ENCODE measurements at regions of chr5 and their contacts with region 1.

Region 1: DNA sequence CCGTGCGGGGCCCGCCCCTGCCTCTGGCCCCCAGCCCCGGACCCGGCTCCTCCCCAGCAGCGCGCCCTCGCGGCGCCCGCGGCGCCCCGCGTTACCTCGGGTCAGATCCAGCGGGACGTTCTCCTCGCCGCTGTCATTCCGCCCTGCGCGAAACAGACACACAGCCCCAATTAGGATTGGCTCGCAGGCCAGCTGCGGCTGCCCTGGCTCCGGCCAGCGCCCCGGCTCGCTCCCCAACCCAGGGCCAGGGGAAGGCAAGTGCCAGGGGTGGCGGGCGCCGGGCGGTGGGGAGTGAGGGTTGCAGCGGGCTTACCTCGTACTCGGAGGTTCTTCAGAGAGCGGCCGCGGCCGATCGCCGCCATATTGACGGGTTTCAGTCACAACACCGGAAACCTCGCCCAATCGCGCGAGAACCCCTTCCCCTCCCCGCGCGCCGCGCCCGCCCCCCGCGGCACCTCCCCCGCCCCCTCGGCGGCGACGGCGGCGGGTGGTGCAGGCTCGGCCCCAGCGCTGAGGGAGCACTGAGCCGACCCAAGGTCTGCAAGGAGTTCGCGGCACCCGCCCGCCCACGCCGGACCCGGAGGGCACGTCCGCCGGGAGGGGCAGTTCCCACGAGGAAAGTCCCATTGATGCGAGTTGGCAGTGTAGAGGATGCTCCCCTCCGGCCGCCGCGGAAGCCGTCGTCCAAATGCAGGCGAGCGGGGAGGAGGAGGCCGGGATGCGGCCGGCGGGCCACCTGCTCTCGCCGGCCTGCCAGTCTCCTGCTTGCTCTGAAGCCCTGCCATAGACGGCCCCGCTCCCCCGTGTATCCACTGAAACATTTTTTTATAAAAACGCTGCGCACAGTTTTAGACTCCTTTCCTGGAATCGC is at the start of gene RICTOR:
- DNase-seq: peak; percentile 92
- ATAC-seq: peak; percentile 79
- H3K4me3 ChIP-seq: peak within 1 kb of the TSS; percentile 75 to 95 (median 82)
- H3K4me3 Mint-ChIP-seq: peak within 1 kb of the TSS; percentile 99
- H3K27ac ChIP-seq: peak within 1 kb of the TSS; percentile 88 to 96
- H3K27ac Mint-ChIP-seq: peak within 1 kb of the TSS; percentile 99
- H3K4me1 ChIP-seq: peaks cover 22 to 39% of the 10 kb centered on the region in 2 donors
- H3K4me1 Mint-ChIP-seq: peaks cover 53% of the 10 kb centered on the region
- H3K27me3 ChIP-seq: no peaks in the 10 kb centered on the region
- H3K27me3 Mint-ChIP-seq: no peaks in the 10 kb centered on the region
- CTCF ChIP-seq: no peak
- total RNA-seq, gene RICTOR: 82.8 and 84.3 TPM in 2 replicates

Region 2: GRCh38 chr5:39040875-39041274 is 33.4 kb before region 1 on chr5:
- CTCF ChIA-PET with region 1: no interaction called
- POLR2A ChIA-PET with region 1: no interaction called
- intact Hi-C with region 1: loop called (anchors 5 kb)
- DNase-seq: no peak
- ATAC-seq: no peak
- H3K4me3 ChIP-seq: no peak overlapping the region
- H3K4me3 Mint-ChIP-seq: no peak overlapping the region
- H3K27ac ChIP-seq: no peak overlapping the region
- H3K27ac Mint-ChIP-seq: no peak overlapping the region
- H3K4me1 ChIP-seq: no peaks in the 10 kb centered on the region
- H3K4me1 Mint-ChIP-seq: peaks cover 43% of the 10 kb centered on the region
- H3K27me3 ChIP-seq: no peaks in the 10 kb centered on the region
- H3K27me3 Mint-ChIP-seq: no peaks in the 10 kb centered on the region
- CTCF ChIP-seq: no peak

Region 3: DNA sequence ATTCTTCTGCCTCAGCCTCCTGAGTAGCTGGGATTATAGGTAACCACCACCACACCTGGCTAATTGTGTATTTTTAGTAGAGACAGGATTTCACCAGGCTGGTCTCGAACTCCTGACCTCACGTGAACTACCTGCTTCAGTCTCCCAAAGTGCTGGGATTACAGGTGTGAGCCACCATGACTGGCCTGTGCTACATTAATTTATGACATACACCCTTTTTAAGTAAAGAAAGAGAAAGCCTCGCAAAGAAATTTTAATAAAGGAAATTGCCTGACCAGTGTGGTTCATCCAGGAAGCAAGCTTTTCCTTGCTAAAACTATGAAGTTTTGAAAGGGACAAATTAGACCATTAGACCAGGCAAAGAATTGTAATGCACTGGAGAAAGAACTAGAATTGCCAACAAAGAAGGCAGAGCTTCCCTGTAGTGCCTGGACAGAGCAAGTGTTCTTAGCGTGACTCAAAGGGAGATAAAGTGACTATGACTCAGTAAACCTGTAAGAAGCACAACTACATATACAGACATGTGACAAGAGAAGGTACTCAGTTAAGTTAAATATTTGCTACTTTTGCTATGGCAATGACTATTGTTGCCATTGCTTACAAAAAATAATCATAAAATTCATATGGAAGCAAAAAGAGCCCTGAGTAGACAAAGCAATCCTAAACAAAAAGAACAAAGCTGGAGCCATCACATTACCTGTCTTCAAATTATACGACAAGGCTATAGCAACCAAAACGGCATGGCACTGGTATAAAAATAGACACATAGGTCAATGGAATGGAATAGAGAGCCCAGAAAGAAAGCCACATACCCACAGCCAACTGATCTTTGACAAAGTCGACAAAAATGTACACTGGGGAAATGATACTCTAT is 90.5 kb after region 1 on chr5:
- CTCF ChIA-PET with region 1: no interaction called
- POLR2A ChIA-PET with region 1: no interaction called
- intact Hi-C with region 1: no loop called
- DNase-seq: no peak
- ATAC-seq: no peak
- H3K4me3 ChIP-seq: no peak overlapping the region
- H3K4me3 Mint-ChIP-seq: no peak overlapping the region
- H3K27ac ChIP-seq: no peak overlapping the region
- H3K27ac Mint-ChIP-seq: no peak overlapping the region
- H3K4me1 ChIP-seq: peaks cover 7 to 8% of the 10 kb centered on the region in 2 donors
- H3K4me1 Mint-ChIP-seq: peaks cover 9% of the 10 kb centered on the region
- H3K27me3 ChIP-seq: no peaks in the 10 kb centered on the region
- H3K27me3 Mint-ChIP-seq: peaks cover 10% of the 10 kb centered on the region
- CTCF ChIP-seq: no peak

Region 4: GRCh38 chr5:39274398-39275085 is 200.3 kb after region 1 on chr5:
- CTCF ChIA-PET with region 1: no interaction called
- POLR2A ChIA-PET with region 1: no interaction called
- intact Hi-C with region 1: loop called (anchors 2 kb)
- DNase-seq: peak; percentile 64
- ATAC-seq: peak; percentile 78
- H3K4me3 ChIP-seq: peak overlapping the region; percentile 12 to 63 (median 41)
- H3K4me3 Mint-ChIP-seq: peak overlapping the region; percentile 87
- H3K27ac ChIP-seq: peak overlapping the region; percentile 81 to 83
- H3K27ac Mint-ChIP-seq: peak overlapping the region; percentile 93
- H3K4me1 ChIP-seq: peaks cover 29 to 30% of the 10 kb centered on the region in 2 donors
- H3K4me1 Mint-ChIP-seq: peaks cover 32% of the 10 kb centered on the region
- H3K27me3 ChIP-seq: no peaks in the 10 kb centered on the region
- H3K27me3 Mint-ChIP-seq: no peaks in the 10 kb centered on the region
- CTCF ChIP-seq: no peak

Region 5: DNA sequence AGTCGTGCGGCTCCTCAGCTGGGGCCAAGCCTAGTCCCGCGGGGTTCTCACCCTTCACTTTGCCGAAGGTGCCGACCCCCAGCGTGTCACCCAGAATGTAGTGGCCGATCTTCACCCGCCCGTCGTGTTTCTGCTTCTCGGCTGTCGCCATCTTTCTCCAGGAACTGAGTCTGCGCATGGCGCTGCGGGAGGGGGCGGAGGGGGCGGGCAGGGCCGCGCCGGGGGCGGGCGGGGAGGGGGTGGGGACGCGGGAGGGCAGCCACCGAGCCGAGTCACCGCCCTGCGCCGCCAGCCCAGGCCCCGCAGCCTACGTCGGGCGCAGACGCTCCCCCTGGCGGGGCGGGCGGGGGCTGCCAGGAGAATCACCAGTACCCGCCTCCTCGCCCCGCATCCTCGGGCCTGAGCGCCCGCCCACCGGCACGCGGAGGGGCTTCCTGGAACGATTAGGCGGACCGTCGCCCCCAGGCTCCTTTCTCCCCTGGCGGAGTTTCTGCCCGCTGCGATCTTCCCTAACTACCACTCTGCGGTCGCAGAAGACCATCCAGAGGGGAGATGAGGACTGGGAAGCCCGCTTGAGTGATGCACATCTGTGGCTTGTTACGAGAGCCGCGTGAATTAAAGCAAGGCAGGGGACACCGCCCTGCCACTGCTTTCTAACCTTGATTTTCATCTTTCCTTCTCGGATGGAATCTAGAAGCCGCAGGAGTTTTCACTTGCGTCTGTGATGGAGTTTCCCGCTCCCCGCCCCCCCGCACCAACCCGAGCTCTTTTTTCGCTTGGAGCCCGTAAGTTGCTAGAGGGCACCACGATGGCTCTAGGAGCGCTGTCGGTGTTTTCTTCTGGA is 1724.0 kb after region 1 on chr5 and contains the start of gene PRKAA1:
- CTCF ChIA-PET with region 1: no interaction called
- POLR2A ChIA-PET with region 1: no interaction called
- intact Hi-C with region 1: loop called (anchors 1 kb)
- DNase-seq: peak; percentile 93
- ATAC-seq: peak; percentile 95
- H3K4me3 ChIP-seq: peak within 1 kb of the TSS; percentile 68 to 98 (median 82)
- H3K4me3 Mint-ChIP-seq: peak within 1 kb of the TSS; percentile 82
- H3K27ac ChIP-seq: peak within 1 kb of the TSS; percentile 87 to 94
- H3K27ac Mint-ChIP-seq: peak within 1 kb of the TSS; percentile 94
- H3K4me1 ChIP-seq: peaks cover 15 to 23% of the 10 kb centered on the region in 2 donors
- H3K4me1 Mint-ChIP-seq: peaks cover 39% of the 10 kb centered on the region
- H3K27me3 ChIP-seq: no peaks in the 10 kb centered on the region
- H3K27me3 Mint-ChIP-seq: no peaks in the 10 kb centered on the region
- CTCF ChIP-seq: peak; percentile 81
- total RNA-seq, gene PRKAA1: 103 and 107 TPM in 2 replicates

Measured in B cell (primary cell).